Ovary (tissue), 10 donors: ENCODE measurements at regions of chr1 and their contacts with region 1.

Region 1: GRCh38 chr1:117059678-117060440 is at the start of gene TTF2:
- DNase-seq: peak; percentile 86 to 92 (median 89)
- H3K4me3 ChIP-seq: peak within 1 kb of the TSS; percentile 44
- H3K27ac ChIP-seq: peak within 1 kb of the TSS in 1 of 2 donors; percentile 10
- H3K4me1 ChIP-seq: peaks cover 4% of the 10 kb centered on the region
- H3K27me3 ChIP-seq: no peaks in the 10 kb centered on the region
- CTCF ChIP-seq: peak in 2 of 3 donors; percentile 17 to 43
- EP300 ChIP-seq: no peak
- POLR2A ChIP-seq: no peak
- total RNA-seq, gene TTF2: 8.2 to 14.0 (median 12.5) TPM

Region 2: DNA sequence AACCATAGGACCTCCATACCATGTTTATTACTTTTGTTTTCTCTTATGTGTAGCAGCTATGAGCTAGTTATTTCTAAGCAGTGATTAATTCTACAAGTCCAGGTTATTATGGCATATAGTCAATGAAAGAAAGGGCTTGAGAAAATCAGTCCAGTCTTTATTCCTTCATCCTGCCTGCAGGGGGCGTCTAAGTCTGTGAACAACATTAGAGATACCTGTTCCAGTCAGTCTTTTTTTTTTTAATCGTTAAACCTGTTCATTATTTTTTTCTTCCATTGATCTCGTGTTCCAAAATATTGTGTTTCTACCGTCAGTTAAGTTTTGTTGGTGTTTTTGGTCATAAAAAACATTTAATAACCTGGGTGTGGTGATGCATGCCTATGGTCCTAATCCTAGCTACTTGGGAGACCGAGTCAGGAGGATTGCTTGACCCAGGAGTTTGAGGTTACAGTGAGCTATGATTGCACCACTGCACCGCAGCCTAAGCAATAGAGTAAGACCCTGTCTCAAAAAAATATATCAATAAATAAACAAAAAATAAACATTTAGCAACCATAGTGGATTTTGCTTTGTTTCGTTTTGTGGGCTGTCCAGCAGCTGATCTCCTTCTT is 335.0 kb before region 1 on chr1:
- intact Hi-C with region 1: loop called in 3 of 4 experiments (anchors 5 to 10 kb)
- DNase-seq: peak in 3 of 5 donors; percentile 22 to 36 (median 30)
- H3K4me3 ChIP-seq: no peak overlapping the region
- H3K27ac ChIP-seq: no peak overlapping the region
- H3K4me1 ChIP-seq: no peaks in the 10 kb centered on the region
- H3K27me3 ChIP-seq: no peaks in the 10 kb centered on the region
- CTCF ChIP-seq: no peak
- EP300 ChIP-seq: no peak
- POLR2A ChIP-seq: no peak

Region 3: DNA sequence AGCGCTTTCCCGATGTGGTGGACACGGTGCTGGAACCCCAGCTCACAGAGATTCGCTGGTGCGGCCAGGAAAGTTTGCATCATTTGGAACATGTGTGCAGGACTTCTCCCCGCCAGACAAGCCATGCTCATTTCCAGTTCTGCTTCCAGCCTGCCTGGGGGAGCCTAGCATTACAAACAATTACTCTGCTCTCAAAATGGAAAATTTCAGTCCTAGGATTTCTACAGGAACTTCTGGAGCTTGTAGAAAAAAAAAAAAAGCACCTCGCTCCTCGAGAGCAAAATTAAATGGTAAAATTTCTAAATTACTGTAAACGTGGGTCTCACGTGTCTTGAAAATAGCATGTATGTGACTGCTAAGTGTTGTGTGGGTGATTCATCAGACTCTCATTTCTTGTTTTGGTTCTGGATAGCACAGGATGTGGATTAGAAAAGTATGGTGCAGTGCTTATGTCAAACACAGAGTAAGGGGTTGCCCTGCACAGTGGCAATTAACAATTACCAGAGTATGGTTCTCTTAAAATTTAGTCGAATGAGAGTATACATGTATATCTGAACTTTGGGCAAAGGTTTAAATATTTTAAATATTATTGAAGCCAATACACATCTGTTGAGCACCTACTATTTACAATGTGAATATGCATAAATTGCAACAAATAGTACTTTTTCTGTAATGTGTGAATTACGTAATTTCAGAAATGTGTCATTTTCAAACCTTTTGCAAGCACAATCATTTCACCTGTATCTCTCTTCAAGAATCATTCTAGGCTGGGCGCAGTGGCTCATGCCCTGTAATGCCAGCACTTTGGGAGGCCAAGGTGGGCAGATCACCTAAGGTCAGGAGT is 211.9 kb before region 1 on chr1:
- intact Hi-C with region 1: loop called in 2 of 4 experiments (anchors 10 kb)
- DNase-seq: peak in 1 of 5 donors; percentile 27
- H3K4me3 ChIP-seq: no peak overlapping the region
- H3K27ac ChIP-seq: no peak overlapping the region
- H3K4me1 ChIP-seq: no peaks in the 10 kb centered on the region
- H3K27me3 ChIP-seq: no peaks in the 10 kb centered on the region
- CTCF ChIP-seq: no peak
- EP300 ChIP-seq: no peak
- POLR2A ChIP-seq: no peak

Region 4: GRCh38 chr1:116919802-116920201 is 140.1 kb before region 1 on chr1:
- intact Hi-C with region 1: loop called in 1 of 4 experiments (anchors 10 kb)
- DNase-seq: no peak
- H3K4me3 ChIP-seq: no peak overlapping the region
- H3K27ac ChIP-seq: no peak overlapping the region
- H3K4me1 ChIP-seq: peaks cover 15% of the 10 kb centered on the region
- H3K27me3 ChIP-seq: no peaks in the 10 kb centered on the region
- CTCF ChIP-seq: no peak
- EP300 ChIP-seq: no peak
- POLR2A ChIP-seq: no peak

Region 5: GRCh38 chr1:117295001-117295400 is 235.1 kb after region 1 on chr1:
- intact Hi-C with region 1: no loop called
- DNase-seq: no peak
- H3K4me3 ChIP-seq: no peak overlapping the region
- H3K27ac ChIP-seq: no peak overlapping the region
- H3K4me1 ChIP-seq: no peaks in the 10 kb centered on the region
- H3K27me3 ChIP-seq: no peaks in the 10 kb centered on the region
- CTCF ChIP-seq: no peak
- EP300 ChIP-seq: no peak
- POLR2A ChIP-seq: no peak

Region 6: GRCh38 chr1:117758444-117759316 is 698.8 kb after region 1 on chr1:
- intact Hi-C with region 1: loop called in 1 of 4 experiments (anchors 10 kb)
- DNase-seq: peak; percentile 70 to 82 (median 73)
- H3K4me3 ChIP-seq: peak overlapping the region; percentile 34
- H3K27ac ChIP-seq: no peak overlapping the region
- H3K4me1 ChIP-seq: peaks cover 2% of the 10 kb centered on the region
- H3K27me3 ChIP-seq: no peaks in the 10 kb centered on the region
- CTCF ChIP-seq: peak; percentile 51 to 82 (median 74)
- EP300 ChIP-seq: no peak
- POLR2A ChIP-seq: no peak